PC-9 (cell line): ENCODE measurements at regions of chr9 and their contacts with region 1.

Region 1: DNA sequence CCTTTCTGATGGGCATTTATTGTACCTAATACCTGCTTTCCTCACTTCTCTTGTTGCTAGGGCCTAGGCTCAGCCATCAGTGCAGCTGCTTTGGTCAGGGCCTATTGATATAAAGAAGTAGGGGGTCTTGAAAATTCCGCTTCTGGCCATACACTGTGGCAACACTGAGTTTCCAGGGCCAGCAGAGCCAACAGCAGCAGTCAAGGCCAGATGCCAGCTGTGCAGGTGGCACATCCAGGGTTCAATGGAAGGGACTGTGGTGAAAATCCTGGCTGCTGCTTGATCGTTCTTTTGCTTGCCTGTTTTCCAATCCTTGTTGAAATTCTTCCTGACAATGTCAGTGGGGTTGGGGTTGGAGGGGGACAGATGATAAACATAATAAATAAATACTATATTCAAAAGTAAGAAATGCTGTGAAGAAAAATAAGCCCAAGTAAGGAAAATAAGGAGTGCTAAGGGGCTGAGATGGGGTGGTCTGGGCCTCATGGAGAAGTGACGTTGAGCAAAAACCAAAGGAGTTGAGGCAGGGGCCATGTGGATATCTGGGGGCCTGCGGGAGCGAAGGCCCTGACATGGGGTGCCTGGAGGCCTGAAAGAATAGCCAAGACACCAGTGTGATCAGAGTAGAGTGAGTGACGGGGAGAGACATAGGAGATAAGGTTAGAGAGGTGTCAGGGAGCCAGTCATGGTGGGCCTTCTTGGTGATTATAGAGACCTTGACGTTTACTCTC is 91.0 kb upstream of the ALDH1B1 start:
- DNase-seq: no peak
- H3K4me3 ChIP-seq: no peak overlapping the region
- H3K27ac ChIP-seq: no peak overlapping the region
- H3K4me1 ChIP-seq: no peaks in the 10 kb centered on the region
- H3K27me3 ChIP-seq: no peaks in the 10 kb centered on the region
- CTCF ChIP-seq: no peak

Region 2: GRCh38 chr9:38160613-38161215 is 140.8 kb before region 1 on chr9:
- CTCF ChIA-PET with region 1: interaction called, 15 read pairs
- POLR2A ChIA-PET with region 1: no interaction called
- intact Hi-C with region 1: no loop called
- DNase-seq: peak in 1 of 2 experiments; percentile 37
- H3K4me3 ChIP-seq: no peak overlapping the region
- H3K27ac ChIP-seq: no peak overlapping the region
- H3K4me1 ChIP-seq: no peaks in the 10 kb centered on the region
- H3K27me3 ChIP-seq: no peaks in the 10 kb centered on the region
- CTCF ChIP-seq: peak; percentile 81